Activated CD4-positive, alpha-beta T cell treated with anti-CD3 and anti-CD28 coated beads for 36 hours (primary cell): ENCODE measurements at regions of chr6 and their contacts with region 1.

Region 1: DNA sequence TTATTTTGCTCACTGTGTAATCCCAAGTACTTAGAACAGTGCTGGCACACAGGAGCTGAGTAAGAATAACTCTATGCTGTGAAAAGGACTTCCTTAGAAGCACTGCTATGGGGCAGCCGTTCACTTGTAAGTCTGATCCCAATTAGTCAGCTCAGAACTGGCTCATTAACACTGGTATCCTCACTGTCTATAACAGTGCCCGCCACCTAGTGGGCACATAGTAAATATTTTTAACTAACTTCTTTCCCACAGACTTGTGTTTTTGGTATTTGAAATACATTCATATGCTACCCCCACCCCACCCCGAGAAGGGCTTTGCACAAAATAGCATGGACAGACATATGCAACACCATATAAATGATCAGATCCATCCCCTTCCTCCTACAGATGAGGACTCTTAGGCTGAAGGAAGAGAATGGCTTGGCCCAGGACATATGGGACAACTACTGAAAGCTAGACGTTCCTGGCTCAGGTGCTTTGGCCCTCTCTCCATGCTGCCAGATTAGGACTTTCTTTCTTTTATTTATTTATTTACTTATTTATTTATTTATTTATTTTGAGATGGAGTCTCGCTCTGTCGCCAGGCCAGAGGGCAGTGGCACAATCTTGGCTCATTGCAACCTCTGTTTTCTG is 47.1 kb downstream of the DST start:
- DNase-seq: peak; percentile 72
- ATAC-seq: peak; percentile 65
- H3K4me3 Mint-ChIP-seq: no peak overlapping the region
- H3K27ac Mint-ChIP-seq: no peak overlapping the region
- H3K4me1 Mint-ChIP-seq: peaks cover 34% of the 10 kb centered on the region
- H3K27me3 Mint-ChIP-seq: no peaks in the 10 kb centered on the region

Region 2: DNA sequence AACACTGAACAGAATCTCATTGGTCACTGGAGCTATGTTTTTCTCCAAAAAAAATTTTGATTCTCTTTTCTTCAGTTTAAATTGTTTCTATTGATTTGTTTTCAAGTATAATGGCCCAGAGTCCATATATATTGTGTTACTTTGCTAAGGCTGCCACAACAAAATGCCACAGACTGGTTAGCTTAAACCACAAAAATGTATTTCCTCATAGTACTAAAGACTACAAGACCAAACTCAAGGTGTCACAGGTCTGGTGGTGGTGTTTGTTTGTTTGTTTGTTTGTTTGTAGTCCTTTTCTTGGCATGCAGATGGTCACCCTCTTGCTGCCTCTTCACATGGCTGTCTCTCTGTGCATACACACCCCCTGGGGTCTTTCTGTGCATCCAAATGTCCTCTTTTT is 754.3 kb before region 1 on chr6:
- CTCF ChIA-PET with region 1: no interaction called
- POLR2A ChIA-PET with region 1: no interaction called
- intact Hi-C with region 1: no loop called
- DNase-seq: no peak
- ATAC-seq: no peak
- H3K4me3 Mint-ChIP-seq: no peak overlapping the region
- H3K27ac Mint-ChIP-seq: no peak overlapping the region
- H3K4me1 Mint-ChIP-seq: no peaks in the 10 kb centered on the region
- H3K27me3 Mint-ChIP-seq: no peaks in the 10 kb centered on the region

Region 3: GRCh38 chr6:55980627-55981211 is 614.9 kb before region 1 on chr6:
- CTCF ChIA-PET with region 1: no interaction called
- POLR2A ChIA-PET with region 1: no interaction called
- intact Hi-C with region 1: loop called in 1 of 2 experiments (anchors 5 kb)
- DNase-seq: peak; percentile 9
- ATAC-seq: no peak
- H3K4me3 Mint-ChIP-seq: no peak overlapping the region
- H3K27ac Mint-ChIP-seq: no peak overlapping the region
- H3K4me1 Mint-ChIP-seq: no peaks in the 10 kb centered on the region
- H3K27me3 Mint-ChIP-seq: no peaks in the 10 kb centered on the region

Region 4: GRCh38 chr6:56359201-56359899 is 236.3 kb before region 1 on chr6:
- CTCF ChIA-PET with region 1: interaction called, 13 read pairs
- POLR2A ChIA-PET with region 1: no interaction called
- intact Hi-C with region 1: loop called (anchors 1 kb)
- DNase-seq: peak; percentile 75
- ATAC-seq: no peak
- H3K4me3 Mint-ChIP-seq: no peak overlapping the region
- H3K27ac Mint-ChIP-seq: no peak overlapping the region
- H3K4me1 Mint-ChIP-seq: no peaks in the 10 kb centered on the region
- H3K27me3 Mint-ChIP-seq: peaks cover 1% of the 10 kb centered on the region

Region 5: DNA sequence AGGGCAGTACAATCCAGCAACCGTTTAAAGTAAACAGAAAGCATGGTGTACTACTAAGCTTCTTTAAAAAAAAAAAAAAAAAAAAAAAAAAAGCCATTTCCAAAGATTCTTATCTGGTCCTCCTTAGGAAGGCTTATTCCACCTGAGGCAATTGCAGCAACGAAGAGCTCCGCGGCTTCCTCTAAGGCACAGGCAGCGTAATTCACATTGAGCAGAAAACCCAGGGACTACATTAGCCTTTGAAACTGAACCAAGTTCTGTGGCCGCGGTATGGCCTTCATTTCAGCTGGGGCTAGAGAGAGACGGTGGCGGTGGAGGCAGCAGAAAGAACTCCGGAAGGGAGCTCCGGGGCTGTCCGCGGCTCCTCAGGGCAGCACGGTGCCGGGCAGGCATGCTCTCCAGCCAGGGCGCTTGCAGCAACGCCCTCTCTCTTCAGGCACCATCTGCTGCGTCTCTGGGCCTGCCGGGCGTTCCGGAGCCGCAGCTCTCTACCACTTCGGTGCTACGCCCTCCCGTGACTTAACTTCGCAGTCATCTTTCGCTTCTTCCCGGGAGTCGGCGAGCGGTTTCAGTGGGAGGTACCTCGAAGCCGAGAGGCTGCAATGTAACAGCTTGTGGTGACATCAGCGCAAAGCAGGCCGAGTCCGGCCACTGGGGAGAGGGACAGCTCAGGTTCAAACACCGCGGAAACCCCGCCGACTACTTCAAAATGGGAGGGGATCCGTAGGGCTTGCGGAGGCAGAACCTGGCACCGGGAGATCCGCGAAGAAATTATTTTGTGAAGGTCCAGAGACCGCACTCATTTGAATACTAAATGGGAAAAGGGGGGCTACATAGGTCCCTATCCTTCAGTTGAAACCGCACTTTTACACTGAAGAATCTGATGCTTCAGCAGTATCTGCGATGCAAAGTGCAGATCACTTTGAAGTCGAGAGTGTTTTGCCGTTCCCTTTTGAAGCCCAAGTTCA is 53.0 kb before region 1 on chr6:
- CTCF ChIA-PET with region 1: interaction called, 13 read pairs
- POLR2A ChIA-PET with region 1: no interaction called
- intact Hi-C with region 1: loop called (anchors 2 kb)
- DNase-seq: peak; percentile 85
- ATAC-seq: peak; percentile 95
- H3K4me3 Mint-ChIP-seq: no peak overlapping the region
- H3K27ac Mint-ChIP-seq: no peak overlapping the region
- H3K4me1 Mint-ChIP-seq: no peaks in the 10 kb centered on the region
- H3K27me3 Mint-ChIP-seq: no peaks in the 10 kb centered on the region

Region 6: GRCh38 chr6:56730663-56731529 is 135.3 kb after region 1 on chr6:
- CTCF ChIA-PET with region 1: no interaction called
- POLR2A ChIA-PET with region 1: no interaction called
- intact Hi-C with region 1: no loop called
- DNase-seq: no peak
- ATAC-seq: no peak
- H3K4me3 Mint-ChIP-seq: no peak overlapping the region
- H3K27ac Mint-ChIP-seq: no peak overlapping the region
- H3K4me1 Mint-ChIP-seq: no peaks in the 10 kb centered on the region
- H3K27me3 Mint-ChIP-seq: no peaks in the 10 kb centered on the region